ENCODE measurements at regions of chr2 and their contacts with region 1.

Region 1: DNA sequence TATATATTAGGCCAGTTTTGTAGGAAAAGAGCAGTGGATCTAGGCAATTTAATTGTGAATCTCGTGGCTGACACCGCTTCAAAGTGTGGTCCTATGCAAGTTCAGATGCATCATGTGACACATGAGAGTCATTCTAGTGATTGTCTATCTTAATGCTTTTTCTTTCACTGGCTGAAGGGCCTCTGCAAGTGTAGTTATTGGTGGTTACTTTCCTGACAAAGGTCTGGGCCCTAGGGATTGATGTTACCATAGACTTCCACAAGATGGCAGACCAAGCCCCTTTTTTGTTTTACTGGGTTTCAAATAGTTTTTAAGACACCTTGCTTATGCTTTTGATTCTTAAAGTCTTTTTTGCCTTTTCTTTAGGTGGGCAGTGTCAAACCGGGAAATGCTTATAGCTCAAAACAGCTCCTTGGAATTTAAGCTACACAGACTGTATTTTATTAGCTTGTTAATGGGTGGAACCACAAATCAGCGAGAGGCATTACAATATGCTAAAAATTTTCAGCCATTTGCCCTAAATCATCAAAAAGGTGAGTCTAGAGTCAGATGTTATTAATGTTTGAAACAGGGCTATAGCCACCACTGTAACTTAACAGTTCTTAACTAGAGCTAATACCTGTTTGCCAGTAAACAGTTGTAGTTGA is 25.9 kb downstream of the CD8A start:
- DNase-seq: peak; percentile 41
- ATAC-seq: peak; percentile 72
- H3K4me3 Mint-ChIP-seq: no peak overlapping the region
- H3K27ac Mint-ChIP-seq: no peak overlapping the region
- H3K4me1 Mint-ChIP-seq: peaks cover 21% of the 10 kb centered on the region
- H3K27me3 Mint-ChIP-seq: no peaks in the 10 kb centered on the region

Region 2: GRCh38 chr2:86274918-86275275 is 489.9 kb before region 1 on chr2:
- CTCF ChIA-PET with region 1: no interaction called
- POLR2A ChIA-PET with region 1: no interaction called
- intact Hi-C with region 1: no loop called
- DNase-seq: no peak
- ATAC-seq: peak; percentile 37
- H3K4me3 Mint-ChIP-seq: no peak overlapping the region
- H3K27ac Mint-ChIP-seq: no peak overlapping the region
- H3K4me1 Mint-ChIP-seq: peaks cover 18% of the 10 kb centered on the region
- H3K27me3 Mint-ChIP-seq: peaks cover 6% of the 10 kb centered on the region

Region 3: DNA sequence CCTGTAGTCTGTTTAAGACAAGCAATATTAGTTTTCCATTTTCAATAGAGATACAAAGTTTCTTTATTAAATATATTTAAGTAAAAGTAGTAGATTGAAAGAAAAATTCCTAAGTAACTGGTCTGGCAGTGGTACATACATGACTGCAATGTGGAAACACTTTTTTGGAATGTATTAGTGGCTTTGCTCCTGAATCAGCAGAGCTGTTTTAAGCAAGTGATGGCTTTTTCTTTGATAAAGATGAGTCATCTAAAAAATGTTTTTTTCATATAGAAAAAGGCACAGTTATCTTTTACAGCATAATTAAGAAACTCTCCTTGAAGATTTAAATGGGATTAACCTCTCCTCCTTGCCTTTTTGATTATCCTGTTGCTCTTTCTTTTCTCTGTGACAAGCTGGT is 288.7 kb before region 1 on chr2:
- CTCF ChIA-PET with region 1: no interaction called
- POLR2A ChIA-PET with region 1: no interaction called
- intact Hi-C with region 1: no loop called
- DNase-seq: no peak
- ATAC-seq: no peak
- H3K4me3 Mint-ChIP-seq: no peak overlapping the region
- H3K27ac Mint-ChIP-seq: peak overlapping the region; percentile 58
- H3K4me1 Mint-ChIP-seq: peaks cover 44% of the 10 kb centered on the region
- H3K27me3 Mint-ChIP-seq: no peaks in the 10 kb centered on the region

Region 4: GRCh38 chr2:86518481-86518880 is 246.3 kb before region 1 on chr2:
- CTCF ChIA-PET with region 1: no interaction called
- POLR2A ChIA-PET with region 1: no interaction called
- intact Hi-C with region 1: loop called in 1 of 2 experiments (anchors 5 kb)
- DNase-seq: peak; percentile 50
- ATAC-seq: peak; percentile 44
- H3K4me3 Mint-ChIP-seq: no peak overlapping the region
- H3K27ac Mint-ChIP-seq: no peak overlapping the region
- H3K4me1 Mint-ChIP-seq: no peaks in the 10 kb centered on the region
- H3K27me3 Mint-ChIP-seq: no peaks in the 10 kb centered on the region

Region 5: DNA sequence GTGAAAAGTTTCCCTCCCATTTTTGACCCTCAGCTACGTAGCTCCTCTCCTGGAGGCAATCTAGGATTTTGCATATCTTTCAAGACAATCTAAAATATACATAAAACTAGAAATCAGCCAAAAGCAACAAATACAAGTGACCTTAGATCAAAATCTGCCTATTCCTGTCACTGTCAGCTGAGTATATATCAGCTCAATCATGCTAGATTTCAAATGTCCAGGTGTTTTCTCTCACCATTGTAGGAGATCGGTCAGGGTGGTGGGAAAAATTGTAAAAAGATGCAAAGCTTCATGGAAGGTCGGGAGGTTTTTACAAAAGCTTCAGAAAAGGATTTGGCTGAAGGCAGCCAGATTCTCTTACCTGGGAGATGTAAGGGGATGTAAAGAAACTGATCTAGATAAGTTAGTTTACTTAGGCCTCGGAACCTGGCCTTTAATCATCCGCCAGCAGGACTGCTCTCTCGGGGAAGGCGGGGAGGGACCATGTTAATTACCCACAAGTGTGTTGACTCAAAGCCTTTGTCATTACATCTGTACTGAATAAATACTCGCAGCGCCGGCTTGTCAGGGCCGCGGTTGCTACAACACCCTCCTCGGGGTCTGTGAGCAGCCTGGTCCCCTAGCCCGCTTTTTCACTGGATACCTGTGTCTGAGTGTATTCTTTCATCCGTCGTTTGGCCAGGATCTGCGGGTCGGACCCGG is 208.4 kb before region 1 on chr2:
- CTCF ChIA-PET with region 1: no interaction called
- POLR2A ChIA-PET with region 1: no interaction called
- intact Hi-C with region 1: no loop called
- DNase-seq: no peak
- ATAC-seq: no peak
- H3K4me3 Mint-ChIP-seq: no peak overlapping the region
- H3K27ac Mint-ChIP-seq: no peak overlapping the region
- H3K4me1 Mint-ChIP-seq: peaks cover 39% of the 10 kb centered on the region
- H3K27me3 Mint-ChIP-seq: no peaks in the 10 kb centered on the region

Region 6: GRCh38 chr2:86750240-86750839 is 14.4 kb before region 1 on chr2:
- CTCF ChIA-PET with region 1: interaction called, 25 read pairs
- POLR2A ChIA-PET with region 1: no interaction called
- intact Hi-C with region 1: no loop called
- DNase-seq: no peak
- ATAC-seq: no peak
- H3K4me3 Mint-ChIP-seq: no peak overlapping the region
- H3K27ac Mint-ChIP-seq: no peak overlapping the region
- H3K4me1 Mint-ChIP-seq: peaks cover 34% of the 10 kb centered on the region
- H3K27me3 Mint-ChIP-seq: no peaks in the 10 kb centered on the region

Region 7: GRCh38 chr2:86775338-86775737 is 10.6 kb after region 1 on chr2:
- CTCF ChIA-PET with region 1: interaction called, 17 read pairs
- POLR2A ChIA-PET with region 1: no interaction called
- intact Hi-C with region 1: no loop called
- DNase-seq: no peak
- ATAC-seq: no peak
- H3K4me3 Mint-ChIP-seq: no peak overlapping the region
- H3K27ac Mint-ChIP-seq: no peak overlapping the region
- H3K4me1 Mint-ChIP-seq: no peaks in the 10 kb centered on the region
- H3K27me3 Mint-ChIP-seq: no peaks in the 10 kb centered on the region

Measured in activated CD4-positive, alpha-beta T cell treated with anti-CD3 and anti-CD28 coated beads for 36 hours (primary cell).